ENCODE measurements at regions of chr2 and their contacts with region 1.

Region 1: DNA sequence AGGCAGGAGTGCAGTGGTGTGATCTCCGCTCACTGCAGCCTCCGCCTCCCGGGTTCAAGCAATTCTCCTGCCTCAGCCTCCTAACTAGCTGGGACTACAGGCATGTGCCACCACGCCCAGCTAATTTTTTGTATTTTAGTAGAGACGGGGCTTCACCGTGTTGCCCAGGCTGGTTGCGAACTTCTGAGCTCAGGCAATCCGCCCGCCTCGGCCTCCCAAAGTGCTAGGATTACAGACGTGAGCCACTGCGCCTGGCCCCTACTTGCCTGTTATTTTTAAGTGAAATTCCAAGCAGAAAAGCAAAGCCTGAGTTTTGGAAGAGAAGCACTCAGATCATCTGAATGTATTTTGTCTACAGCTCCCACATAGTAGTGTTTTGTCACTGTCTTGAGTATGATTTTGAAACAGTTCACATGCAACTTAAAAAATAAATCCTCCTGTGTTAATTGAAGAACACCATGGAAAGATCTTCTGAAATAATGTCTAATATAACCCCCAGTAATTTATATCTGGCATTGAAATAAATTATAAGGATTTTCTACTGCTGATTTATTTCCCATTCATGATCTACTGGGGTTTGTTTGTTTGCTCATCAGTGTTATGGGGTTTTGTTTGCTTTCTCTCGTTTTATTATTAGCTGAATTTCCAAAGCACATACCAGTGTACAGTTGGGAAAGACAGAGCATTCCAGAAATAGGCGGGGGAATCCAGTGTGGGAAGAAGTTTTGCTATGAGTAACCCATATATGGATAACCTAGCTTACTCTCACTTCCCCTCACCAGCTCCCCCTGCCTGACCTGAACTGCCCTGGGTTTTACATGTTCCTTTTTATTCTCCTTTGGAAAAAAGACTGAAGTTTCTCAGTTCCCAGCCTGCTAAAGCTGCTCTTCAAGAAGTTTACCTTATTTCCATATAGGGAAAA is 80.1 kb upstream of the MAP3K20 start:
- DNase-seq: peak; percentile 72 to 99
- H3K4me3 ChIP-seq: peak overlapping the region; percentile 2; the same call in 1 of the 2 replicates
- H3K27ac ChIP-seq: peak overlapping the region; percentile 90
- H3K4me1 ChIP-seq: peaks cover 67% of the 10 kb centered on the region
- H3K27me3 ChIP-seq: no peaks in the 10 kb centered on the region
- CTCF ChIP-seq: peak; percentile 75

Region 2: GRCh38 chr2:172953970-172954852 is 41.4 kb before region 1 on chr2:
- CTCF ChIA-PET with region 1: no interaction called
- POLR2A ChIA-PET with region 1: no interaction called
- intact Hi-C with region 1: loop called (anchors 1 kb)
- DNase-seq: peak; percentile 80 to 99
- H3K4me3 ChIP-seq: peak overlapping the region; percentile 36; the same call in 1 of the 2 replicates
- H3K27ac ChIP-seq: peak overlapping the region; percentile 85
- H3K4me1 ChIP-seq: peaks cover 44% of the 10 kb centered on the region
- H3K27me3 ChIP-seq: no peaks in the 10 kb centered on the region
- CTCF ChIP-seq: no peak

Region 3: DNA sequence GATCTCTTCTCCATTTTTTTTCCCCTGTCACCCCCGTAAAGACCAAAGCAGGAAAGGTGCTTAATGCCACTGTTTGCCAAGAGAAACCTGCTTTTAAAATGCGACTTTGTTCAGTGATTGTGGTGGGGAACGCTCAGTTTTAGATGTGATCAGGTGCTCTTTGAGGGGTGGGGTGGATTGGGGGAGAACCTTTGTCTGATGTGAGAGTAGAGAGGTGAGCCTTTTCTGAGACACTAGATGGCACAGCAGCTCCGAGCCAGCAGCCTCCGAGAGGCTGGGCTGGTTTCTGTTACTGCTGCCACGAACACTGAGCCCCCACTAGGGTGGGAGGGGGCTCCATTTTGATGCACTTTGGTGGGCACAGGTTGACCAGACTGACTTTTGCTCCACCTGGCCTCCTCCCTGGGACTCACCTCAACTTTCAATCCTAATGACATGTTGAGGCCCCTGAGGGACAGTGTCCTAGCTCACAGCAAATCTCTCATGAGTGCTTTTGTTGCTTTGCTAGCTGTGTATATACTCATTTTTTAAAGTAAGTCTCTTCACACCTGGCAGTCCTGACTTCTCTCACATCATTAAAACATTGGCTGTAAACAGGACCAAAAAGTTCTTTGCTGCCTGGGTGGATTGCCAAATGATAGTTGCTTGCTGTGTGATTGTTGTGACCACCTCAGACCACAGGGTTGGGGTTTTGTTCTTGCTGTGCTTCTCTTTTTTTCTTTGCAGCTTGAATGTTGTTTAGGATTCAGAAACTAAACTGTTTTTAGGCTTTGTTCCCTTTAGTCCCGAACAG is 18.1 kb before region 1 on chr2:
- CTCF ChIA-PET with region 1: no interaction called
- POLR2A ChIA-PET with region 1: no interaction called
- intact Hi-C with region 1: loop called (anchors 2 kb)
- DNase-seq: no peak
- H3K4me3 ChIP-seq: no peak overlapping the region
- H3K27ac ChIP-seq: no peak overlapping the region
- H3K4me1 ChIP-seq: peaks cover 16% of the 10 kb centered on the region
- H3K27me3 ChIP-seq: no peaks in the 10 kb centered on the region
- CTCF ChIP-seq: no peak

Region 4: DNA sequence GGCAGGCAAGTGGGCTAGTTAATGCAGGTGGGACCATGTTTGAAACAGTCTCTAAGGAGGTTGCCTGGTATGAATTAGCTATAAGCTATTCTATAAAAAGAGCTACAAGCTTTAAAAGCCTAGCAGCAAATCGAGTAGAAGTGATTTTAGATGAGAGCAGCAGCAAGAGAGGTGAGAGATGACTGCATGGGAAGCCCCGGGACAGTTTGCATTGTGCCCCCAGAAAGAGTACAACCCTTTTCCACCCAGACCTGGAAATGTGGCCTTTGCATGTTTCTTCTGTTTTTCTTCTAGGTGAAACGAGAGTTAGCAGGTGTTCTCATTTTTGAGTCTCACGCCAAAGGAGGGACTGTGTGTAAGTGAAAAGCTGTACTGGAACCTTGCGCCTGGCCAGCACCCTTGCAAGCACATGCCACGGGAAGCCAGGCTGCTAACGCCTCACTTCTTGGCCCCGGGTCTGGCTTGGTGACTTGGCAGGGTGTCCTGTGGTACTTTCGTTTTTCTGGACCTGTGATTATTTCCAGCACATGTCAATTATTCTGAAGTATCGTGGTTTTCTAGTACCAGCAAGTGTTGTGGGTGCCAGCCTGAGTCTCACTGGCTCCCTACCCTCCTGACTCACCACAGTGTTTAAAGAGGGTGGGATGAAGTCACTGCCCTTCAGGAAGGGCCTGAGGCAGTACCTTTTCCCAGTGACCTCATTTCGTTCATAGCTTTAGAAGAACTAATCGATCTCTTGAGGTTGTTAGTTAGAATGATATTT is 10.3 kb before region 1 on chr2:
- CTCF ChIA-PET with region 1: no interaction called
- POLR2A ChIA-PET with region 1: interaction called, 3 read pairs
- intact Hi-C with region 1: loop called (anchors 2 kb)
- DNase-seq: peak; percentile 78 to 99
- H3K4me3 ChIP-seq: peak overlapping the region; percentile 37
- H3K27ac ChIP-seq: peak overlapping the region; percentile 94
- H3K4me1 ChIP-seq: peaks cover 39% of the 10 kb centered on the region
- H3K27me3 ChIP-seq: no peaks in the 10 kb centered on the region
- CTCF ChIP-seq: no peak

Region 5: DNA sequence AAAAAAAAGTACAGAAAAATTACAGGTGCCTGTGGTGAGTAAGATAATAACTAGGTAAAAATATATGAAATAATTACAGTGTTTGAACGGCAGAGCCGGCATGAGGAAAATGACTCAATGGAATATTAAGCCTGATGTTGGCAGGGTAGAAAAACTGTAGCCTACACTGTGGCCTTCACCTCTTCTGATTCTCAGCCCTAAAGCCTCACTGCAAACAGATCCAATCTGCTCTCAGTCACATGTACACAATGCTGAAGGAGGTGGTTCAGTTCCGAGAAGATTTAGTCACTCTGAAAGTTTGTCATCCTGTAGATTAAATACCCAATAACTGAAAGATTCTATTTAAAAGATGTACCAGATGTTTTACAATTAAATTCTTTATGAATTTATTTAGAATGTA is 13.2 kb after region 1 on chr2:
- CTCF ChIA-PET with region 1: no interaction called
- POLR2A ChIA-PET with region 1: interaction called, 13 read pairs
- intact Hi-C with region 1: no loop called
- DNase-seq: no peak
- H3K4me3 ChIP-seq: no peak overlapping the region
- H3K27ac ChIP-seq: no peak overlapping the region
- H3K4me1 ChIP-seq: peaks cover 8% of the 10 kb centered on the region
- H3K27me3 ChIP-seq: no peaks in the 10 kb centered on the region
- CTCF ChIP-seq: no peak

Region 6: DNA sequence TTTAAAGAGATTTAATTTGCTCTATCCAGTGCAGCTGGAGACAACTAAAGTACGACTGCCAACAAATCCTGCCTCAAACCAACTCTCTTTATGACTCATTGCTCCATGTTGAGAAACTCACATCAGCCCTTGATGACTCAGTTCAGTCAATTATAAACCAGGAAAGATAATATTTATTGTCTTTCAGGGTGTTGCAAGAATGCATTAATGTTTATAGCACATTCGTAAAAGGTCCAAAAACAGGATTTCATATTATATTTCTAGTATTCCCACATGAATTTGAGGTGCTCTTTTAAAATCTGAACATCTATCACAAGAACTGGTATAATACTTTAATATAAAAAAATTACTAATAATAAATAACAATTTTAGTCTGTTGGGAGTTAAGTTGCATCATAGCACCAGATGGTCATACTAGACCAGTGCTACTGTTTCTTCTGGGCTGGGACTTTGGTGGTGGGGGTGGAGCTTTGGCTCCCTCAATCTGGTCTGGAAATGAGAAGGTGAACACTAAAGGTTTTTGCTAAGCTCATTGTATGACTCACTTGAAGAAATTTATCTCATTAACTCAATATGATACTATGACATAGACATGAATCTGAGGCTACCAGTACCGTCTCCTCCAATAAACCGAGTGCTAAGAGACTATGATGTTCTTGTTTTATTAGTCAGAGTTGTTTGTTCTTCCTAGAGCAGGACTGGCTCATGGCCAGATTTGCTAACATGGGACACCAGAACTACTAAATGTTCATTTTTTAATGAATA is 53.5 kb after region 1 on chr2:
- CTCF ChIA-PET with region 1: interaction called, 3 read pairs
- POLR2A ChIA-PET with region 1: interaction called, 9 read pairs
- intact Hi-C with region 1: loop called (anchors 2 kb)
- DNase-seq: peak; percentile 91 to 100
- H3K4me3 ChIP-seq: peak overlapping the region; percentile 28; the same call in 1 of the 2 replicates
- H3K27ac ChIP-seq: peak overlapping the region; percentile 88
- H3K4me1 ChIP-seq: peaks cover 72% of the 10 kb centered on the region
- H3K27me3 ChIP-seq: no peaks in the 10 kb centered on the region
- CTCF ChIP-seq: 0 out of 2 replicates have a peak, but pooled peaks have one; percentile 6